ENCODE measurements at regions of chr3 and their contacts with region 1.

Region 1: DNA sequence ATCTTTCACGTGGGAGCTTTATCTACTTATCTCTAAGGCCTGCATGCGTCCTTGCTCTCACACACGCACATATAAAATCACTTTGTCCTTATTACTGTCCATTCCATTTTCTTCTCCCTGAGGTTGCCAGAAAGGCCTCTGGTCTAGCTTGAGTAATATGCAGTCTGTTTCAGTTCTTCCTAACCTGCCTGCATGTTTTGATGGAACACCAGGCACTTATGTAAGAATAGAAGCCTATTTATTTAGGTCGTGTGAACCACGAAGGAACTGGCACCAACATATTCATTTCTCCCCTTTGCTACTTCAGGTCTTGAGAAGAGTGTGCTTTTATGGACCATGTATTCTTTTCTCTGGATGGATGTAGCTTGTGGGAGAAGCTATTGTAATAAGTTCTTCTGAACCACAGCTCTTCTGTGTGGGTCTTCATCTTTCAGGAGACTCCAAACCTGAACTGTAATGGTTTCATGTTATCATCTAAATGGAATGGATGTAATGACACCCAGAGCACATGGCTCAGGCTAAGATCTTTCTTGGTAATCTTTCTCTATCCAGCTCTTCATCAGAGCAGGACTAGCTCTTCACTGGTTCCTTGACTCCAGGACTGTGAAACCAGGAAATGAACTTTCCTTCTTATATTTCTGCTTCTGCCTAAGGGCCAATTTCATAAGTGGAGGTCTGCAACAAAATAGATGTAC is 53.8 kb downstream of the UBE2E2 start:
- DNase-seq: no peak
- ATAC-seq: no peak
- H3K4me3 ChIP-seq: no peak overlapping the region
- H3K4me3 Mint-ChIP-seq: no peak overlapping the region
- H3K27ac ChIP-seq: no peak overlapping the region
- H3K27ac Mint-ChIP-seq: no peak overlapping the region
- H3K4me1 ChIP-seq: peaks cover 19 to 22% of the 10 kb centered on the region in 2 donors
- H3K4me1 Mint-ChIP-seq: peaks cover 46% of the 10 kb centered on the region
- H3K27me3 ChIP-seq: no peaks in the 10 kb centered on the region
- H3K27me3 Mint-ChIP-seq: no peaks in the 10 kb centered on the region
- CTCF ChIP-seq: no peak

Region 2: DNA sequence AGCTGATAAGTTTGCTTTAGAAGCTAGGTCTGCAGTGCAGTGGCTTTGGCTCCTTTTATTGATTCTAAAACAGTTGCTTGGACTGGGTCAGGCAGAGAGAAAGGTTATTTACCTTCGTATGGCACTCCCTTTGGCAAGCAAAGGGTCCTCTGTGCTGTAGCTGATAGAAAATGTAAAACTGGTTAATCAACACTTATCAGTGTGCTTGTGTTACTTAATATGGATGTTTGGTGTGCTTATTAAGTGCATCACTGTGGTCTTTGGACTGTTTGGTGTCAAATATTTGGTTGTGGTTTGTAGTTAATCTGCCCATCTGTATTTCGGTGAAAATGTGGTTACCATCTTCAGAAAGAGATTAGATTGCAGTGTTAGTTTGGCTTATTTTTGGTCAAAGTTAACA is 37.8 kb before region 1 on chr3:
- CTCF ChIA-PET with region 1: no interaction called
- POLR2A ChIA-PET with region 1: no interaction called
- intact Hi-C with region 1: loop called (anchors 5 kb)
- DNase-seq: no peak
- ATAC-seq: no peak
- H3K4me3 ChIP-seq: no peak overlapping the region
- H3K4me3 Mint-ChIP-seq: peak overlapping the region; percentile 4
- H3K27ac ChIP-seq: peak overlapping the region in 1 of 2 donors; percentile 48
- H3K27ac Mint-ChIP-seq: peak overlapping the region; percentile 23
- H3K4me1 ChIP-seq: peaks cover 27 to 32% of the 10 kb centered on the region in 2 donors
- H3K4me1 Mint-ChIP-seq: peaks cover 61% of the 10 kb centered on the region
- H3K27me3 ChIP-seq: no peaks in the 10 kb centered on the region
- H3K27me3 Mint-ChIP-seq: no peaks in the 10 kb centered on the region
- CTCF ChIP-seq: no peak

Region 3: DNA sequence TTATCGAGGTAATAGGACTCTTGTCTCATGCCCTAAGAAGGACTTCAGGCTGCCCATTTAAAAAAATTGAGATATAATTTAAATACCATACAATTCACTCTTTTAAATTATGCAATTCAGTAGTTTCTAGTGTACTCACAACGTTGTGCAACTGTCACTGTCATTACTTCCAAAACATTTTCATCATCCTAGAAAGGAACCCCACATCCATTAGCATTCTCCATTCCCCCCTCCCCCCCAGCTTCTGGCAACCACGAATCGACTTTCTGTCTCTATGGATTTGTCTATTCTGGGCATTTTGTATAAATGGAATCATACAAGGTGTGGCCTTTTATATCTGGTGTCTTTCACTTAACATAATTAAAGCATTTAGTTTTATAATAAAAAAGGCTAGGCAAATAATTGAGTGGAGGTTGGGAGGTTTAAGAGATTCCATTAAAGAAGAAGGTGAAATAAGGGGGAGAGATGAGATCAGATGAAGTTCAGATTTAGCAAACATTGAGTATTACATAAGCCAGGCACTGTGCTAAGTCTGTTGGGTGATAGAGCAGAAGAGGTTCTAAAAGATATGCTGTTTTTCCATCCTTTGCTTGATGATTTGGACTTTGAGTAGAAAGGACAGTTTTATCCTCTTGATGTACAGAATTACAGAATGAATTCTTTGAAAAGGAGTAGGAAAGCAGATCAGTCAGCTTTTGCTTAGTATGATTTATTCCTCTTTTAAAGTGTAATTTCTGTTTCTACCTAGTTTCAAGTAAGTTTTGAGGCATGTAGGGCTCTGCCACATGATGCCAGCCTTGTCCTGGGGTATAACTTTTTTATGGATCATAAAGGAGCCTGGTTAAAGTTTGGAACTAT is 17.4 kb before region 1 on chr3:
- CTCF ChIA-PET with region 1: no interaction called
- POLR2A ChIA-PET with region 1: no interaction called
- intact Hi-C with region 1: loop called (anchors 2 kb)
- DNase-seq: no peak
- ATAC-seq: no peak
- H3K4me3 ChIP-seq: no peak overlapping the region
- H3K4me3 Mint-ChIP-seq: no peak overlapping the region
- H3K27ac ChIP-seq: no peak overlapping the region
- H3K27ac Mint-ChIP-seq: no peak overlapping the region
- H3K4me1 ChIP-seq: peaks cover 12 to 17% of the 10 kb centered on the region in 2 donors
- H3K4me1 Mint-ChIP-seq: peaks cover 66% of the 10 kb centered on the region
- H3K27me3 ChIP-seq: no peaks in the 10 kb centered on the region
- H3K27me3 Mint-ChIP-seq: no peaks in the 10 kb centered on the region
- CTCF ChIP-seq: no peak

Region 4: GRCh38 chr3:23567917-23568316 is 311.0 kb after region 1 on chr3:
- CTCF ChIA-PET with region 1: no interaction called
- POLR2A ChIA-PET with region 1: no interaction called
- intact Hi-C with region 1: no loop called
- DNase-seq: no peak
- ATAC-seq: no peak
- H3K4me3 ChIP-seq: no peak overlapping the region
- H3K4me3 Mint-ChIP-seq: no peak overlapping the region
- H3K27ac ChIP-seq: no peak overlapping the region
- H3K27ac Mint-ChIP-seq: no peak overlapping the region
- H3K4me1 ChIP-seq: peaks cover 0 to 6% of the 10 kb centered on the region in 2 donors
- H3K4me1 Mint-ChIP-seq: peaks cover 20% of the 10 kb centered on the region
- H3K27me3 ChIP-seq: no peaks in the 10 kb centered on the region
- H3K27me3 Mint-ChIP-seq: no peaks in the 10 kb centered on the region
- CTCF ChIP-seq: no peak

Measured in B cell (primary cell).